ENCODE measurements at regions of chr20 and their contacts with region 1.

Region 1: DNA sequence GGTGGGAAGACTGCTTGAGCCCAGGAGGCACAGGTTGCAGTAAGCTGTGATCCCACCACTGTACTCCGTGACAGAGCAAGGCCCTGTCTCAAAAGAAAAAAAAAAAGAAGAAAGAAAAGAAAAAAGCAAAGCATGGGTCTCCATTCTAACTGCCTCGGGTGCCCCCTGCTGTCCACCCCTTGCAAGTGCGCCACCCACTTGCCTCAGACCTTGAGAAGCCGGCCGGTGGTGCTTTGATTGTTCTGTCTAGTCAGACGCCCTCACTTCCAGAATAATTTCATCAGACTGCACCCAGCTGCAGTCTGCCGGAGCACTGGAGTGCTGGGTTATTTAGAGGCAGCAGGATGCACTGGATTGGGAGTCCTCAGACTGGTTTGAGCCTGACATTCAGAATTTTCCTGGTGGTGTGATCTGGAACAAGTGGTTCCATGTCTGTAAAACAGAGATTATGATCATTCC is 17.6 kb upstream of the TM9SF4 start:
- DNase-seq: peak; percentile 92
- H3K4me3 Mint-ChIP-seq: no peak overlapping the region
- H3K27ac Mint-ChIP-seq: no peak overlapping the region
- H3K4me1 Mint-ChIP-seq: no peaks in the 10 kb centered on the region
- H3K27me3 Mint-ChIP-seq: no peaks in the 10 kb centered on the region

Region 2: GRCh38 chr20:31849455-31849925 is 242.4 kb before region 1 on chr20:
- CTCF ChIA-PET with region 1: interaction called, 9 read pairs
- intact Hi-C with region 1: loop called (anchors 1 kb)
- DNase-seq: no peak
- H3K4me3 Mint-ChIP-seq: no peak overlapping the region
- H3K27ac Mint-ChIP-seq: no peak overlapping the region
- H3K4me1 Mint-ChIP-seq: no peaks in the 10 kb centered on the region
- H3K27me3 Mint-ChIP-seq: peaks cover 21% of the 10 kb centered on the region

Region 3: DNA sequence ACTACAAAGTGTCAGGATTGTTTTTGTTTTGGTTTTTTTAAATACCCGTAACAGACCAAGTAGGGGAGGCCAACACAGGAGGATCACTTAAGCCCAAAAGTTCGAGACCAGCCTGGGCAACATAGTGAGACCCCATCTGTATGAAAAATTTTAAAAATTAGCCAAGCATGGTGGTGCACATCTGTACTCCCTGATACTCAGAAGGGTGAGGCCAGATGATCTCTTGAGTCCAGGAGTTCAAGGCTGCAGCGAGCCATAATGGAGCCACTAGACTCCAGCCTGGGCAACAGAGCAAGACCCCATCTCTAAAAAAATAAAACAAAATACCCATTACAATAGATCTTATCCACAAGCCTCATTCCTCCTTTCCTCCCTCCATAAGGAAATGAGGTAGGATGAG is 11.1 kb before region 1 on chr20:
- CTCF ChIA-PET with region 1: interaction called, 11 read pairs
- intact Hi-C with region 1: no loop called
- DNase-seq: no peak
- H3K4me3 Mint-ChIP-seq: no peak overlapping the region
- H3K27ac Mint-ChIP-seq: no peak overlapping the region
- H3K4me1 Mint-ChIP-seq: no peaks in the 10 kb centered on the region
- H3K27me3 Mint-ChIP-seq: peaks cover 4% of the 10 kb centered on the region

Region 4: GRCh38 chr20:32132911-32133549 is 41.1 kb after region 1 on chr20:
- CTCF ChIA-PET with region 1: interaction called, 10 read pairs
- intact Hi-C with region 1: no loop called
- DNase-seq: no peak
- H3K4me3 Mint-ChIP-seq: no peak overlapping the region
- H3K27ac Mint-ChIP-seq: no peak overlapping the region
- H3K4me1 Mint-ChIP-seq: peaks cover 21% of the 10 kb centered on the region
- H3K27me3 Mint-ChIP-seq: no peaks in the 10 kb centered on the region

Region 5: GRCh38 chr20:32336918-32337347 is 245.0 kb after region 1 on chr20:
- CTCF ChIA-PET with region 1: no interaction called
- intact Hi-C with region 1: no loop called
- DNase-seq: no peak
- H3K4me3 Mint-ChIP-seq: no peak overlapping the region
- H3K27ac Mint-ChIP-seq: no peak overlapping the region
- H3K4me1 Mint-ChIP-seq: peaks cover 29% of the 10 kb centered on the region
- H3K27me3 Mint-ChIP-seq: no peaks in the 10 kb centered on the region

Region 6: GRCh38 chr20:32652739-32653526 is 561.0 kb after region 1 on chr20:
- CTCF ChIA-PET with region 1: no interaction called
- intact Hi-C with region 1: loop called (anchors 2 kb)
- DNase-seq: peak; percentile 93
- H3K4me3 Mint-ChIP-seq: no peak overlapping the region
- H3K27ac Mint-ChIP-seq: no peak overlapping the region
- H3K4me1 Mint-ChIP-seq: peaks cover 8% of the 10 kb centered on the region
- H3K27me3 Mint-ChIP-seq: no peaks in the 10 kb centered on the region